ENCODE measurements at regions of chr3 and their contacts with region 1.

Region 1: GRCh38 chr3:143674100-143674968 is 173.9 kb downstream of the SLC9A9 start:
- DNase-seq: peak; percentile 3 to 88
- H3K4me3 ChIP-seq: no peak overlapping the region
- H3K27ac ChIP-seq: no peak overlapping the region
- H3K4me1 ChIP-seq: no peaks in the 10 kb centered on the region; a peak in 1 of 7 replicates
- H3K27me3 ChIP-seq: no peaks in the 10 kb centered on the region
- CTCF ChIP-seq: peak; percentile 67 to 89 (median 88)
- EP300 ChIP-seq: no peak
- POLR2A ChIP-seq: no peak
- RAD21 ChIP-seq: peak; percentile 85 to 91

Region 2: GRCh38 chr3:143433787-143434378 is 240.5 kb before region 1 on chr3:
- CTCF ChIA-PET with region 1: interaction called, 13 read pairs
- POLR2A ChIA-PET with region 1: no interaction called
- DNase-seq: peak in 1 of 2 experiments; percentile 58
- H3K4me3 ChIP-seq: no peak overlapping the region
- H3K27ac ChIP-seq: no peak overlapping the region
- H3K4me1 ChIP-seq: peaks cover 3 to 13% (median 10%) of the 10 kb centered on the region in 4 experiments; a peak in 4 of 7 replicates
- H3K27me3 ChIP-seq: no peaks in the 10 kb centered on the region
- CTCF ChIP-seq: peak in 2 of 3 experiments; percentile 53 to 76; a peak in 3 of 4 replicates
- EP300 ChIP-seq: no peak
- POLR2A ChIP-seq: no peak
- RAD21 ChIP-seq: peak; percentile 78 to 79

Region 3: DNA sequence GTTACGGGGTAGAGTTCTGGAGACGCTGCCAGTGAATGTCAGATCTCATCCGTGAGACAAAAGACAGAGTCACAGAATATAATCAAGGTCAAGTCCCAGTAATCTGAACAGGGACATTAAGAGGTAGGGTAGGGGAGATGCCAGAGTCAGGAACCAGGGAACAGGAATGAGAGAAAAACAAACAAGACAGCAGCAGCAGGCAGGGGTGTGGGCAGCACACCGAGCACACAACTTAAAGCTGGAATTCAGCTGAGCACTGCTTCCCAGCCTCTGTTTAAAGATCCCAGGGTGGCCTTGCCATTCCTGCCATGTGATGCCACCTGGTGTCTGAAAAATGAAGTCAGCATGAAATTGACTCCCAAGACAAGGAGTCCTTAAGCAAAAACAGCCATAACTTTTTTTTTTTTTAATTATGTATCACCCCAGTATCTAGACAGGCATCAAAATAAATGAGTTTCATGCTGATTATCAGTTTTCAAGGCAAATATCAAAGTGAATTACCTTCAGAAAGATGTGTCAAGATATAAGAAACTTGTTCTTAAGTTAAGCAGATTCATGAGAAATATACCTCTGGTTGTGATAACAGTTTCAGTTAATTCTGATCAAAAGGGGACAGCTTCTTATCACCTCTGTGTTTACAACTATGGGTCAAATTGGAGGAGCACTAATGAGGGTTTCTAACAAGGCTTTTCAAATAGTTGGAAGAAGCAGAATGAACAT is 29.8 kb before region 1 on chr3:
- CTCF ChIA-PET with region 1: interaction called, 48 read pairs
- POLR2A ChIA-PET with region 1: no interaction called
- DNase-seq: peak; percentile 43 to 48
- H3K4me3 ChIP-seq: no peak overlapping the region
- H3K27ac ChIP-seq: no peak overlapping the region
- H3K4me1 ChIP-seq: no peaks in the 10 kb centered on the region; a peak in 1 of 7 replicates
- H3K27me3 ChIP-seq: no peaks in the 10 kb centered on the region
- CTCF ChIP-seq: peak; percentile 39 to 75 (median 69)
- EP300 ChIP-seq: no peak
- POLR2A ChIP-seq: no peak
- RAD21 ChIP-seq: peak; percentile 88 to 91

Region 4: DNA sequence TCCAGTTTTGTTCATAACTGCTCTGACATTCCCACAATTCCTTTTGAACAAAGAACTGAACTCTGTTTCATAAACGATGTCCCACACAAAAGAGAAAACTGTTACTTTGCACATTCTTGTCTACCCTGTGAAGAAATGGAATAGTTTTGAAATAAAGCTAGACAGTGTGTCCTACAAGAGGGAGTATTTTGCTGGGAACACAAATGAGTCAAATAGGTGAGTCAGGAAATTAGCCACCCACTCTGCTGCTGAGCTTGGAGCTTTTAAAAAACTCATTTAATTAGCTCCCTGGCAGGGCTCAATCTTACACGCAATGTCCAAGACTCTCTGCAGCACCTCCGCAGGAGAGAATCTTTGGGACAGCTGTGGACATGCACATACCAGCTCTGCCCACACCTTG is 19.4 kb before region 1 on chr3:
- CTCF ChIA-PET with region 1: interaction called, 48 read pairs
- POLR2A ChIA-PET with region 1: no interaction called
- DNase-seq: no peak
- H3K4me3 ChIP-seq: no peak overlapping the region
- H3K27ac ChIP-seq: no peak overlapping the region
- H3K4me1 ChIP-seq: peaks cover 0 to 4% (median 0%) of the 10 kb centered on the region in 4 experiments; a peak in 3 of 7 replicates
- H3K27me3 ChIP-seq: peaks cover 0 to 1% (median 0%) of the 10 kb centered on the region in 4 experiments; a peak in 1 of 7 replicates
- CTCF ChIP-seq: no peak
- EP300 ChIP-seq: no peak
- POLR2A ChIP-seq: no peak
- RAD21 ChIP-seq: no peak

Region 5: GRCh38 chr3:143661677-143662076 is 12.7 kb before region 1 on chr3:
- CTCF ChIA-PET with region 1: interaction called, 12 read pairs
- POLR2A ChIA-PET with region 1: no interaction called
- DNase-seq: no peak
- H3K4me3 ChIP-seq: no peak overlapping the region
- H3K27ac ChIP-seq: no peak overlapping the region
- H3K4me1 ChIP-seq: peaks cover 0 to under 1% (median 0%) of the 10 kb centered on the region in 4 experiments; a peak in 2 of 7 replicates
- H3K27me3 ChIP-seq: no peaks in the 10 kb centered on the region
- CTCF ChIP-seq: no peak
- EP300 ChIP-seq: no peak
- POLR2A ChIP-seq: no peak
- RAD21 ChIP-seq: no peak

Region 6: GRCh38 chr3:143699424-143699823 is 25.1 kb after region 1 on chr3:
- CTCF ChIA-PET with region 1: interaction called, 10 read pairs
- POLR2A ChIA-PET with region 1: no interaction called
- DNase-seq: no peak
- H3K4me3 ChIP-seq: no peak overlapping the region
- H3K27ac ChIP-seq: no peak overlapping the region
- H3K4me1 ChIP-seq: no peaks in the 10 kb centered on the region
- H3K27me3 ChIP-seq: no peaks in the 10 kb centered on the region
- CTCF ChIP-seq: no peak
- EP300 ChIP-seq: no peak
- POLR2A ChIP-seq: no peak
- RAD21 ChIP-seq: no peak

Region 7: DNA sequence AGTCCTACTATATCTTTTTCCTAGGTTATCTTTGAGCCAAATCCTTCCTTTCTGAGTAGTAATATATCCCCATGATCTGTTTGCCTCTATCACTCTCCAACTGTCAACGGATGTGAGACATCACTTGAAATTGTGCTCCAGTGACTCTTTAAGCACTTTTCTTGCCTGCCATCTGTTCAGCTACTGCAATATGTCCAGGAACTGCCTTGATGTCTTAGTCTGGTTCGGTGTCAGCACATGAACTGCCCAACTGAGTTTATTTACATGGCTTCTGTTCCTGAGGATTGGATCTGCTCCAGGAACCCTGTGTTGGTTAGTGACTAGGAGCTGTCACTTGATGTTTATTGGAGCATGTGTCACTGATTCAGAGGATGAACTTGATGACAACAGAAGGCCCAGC is 57.4 kb after region 1 on chr3:
- CTCF ChIA-PET with region 1: no interaction called
- POLR2A ChIA-PET with region 1: no interaction called
- DNase-seq: no peak
- H3K4me3 ChIP-seq: no peak overlapping the region
- H3K27ac ChIP-seq: no peak overlapping the region
- H3K4me1 ChIP-seq: no peaks in the 10 kb centered on the region
- H3K27me3 ChIP-seq: no peaks in the 10 kb centered on the region
- CTCF ChIP-seq: no peak
- EP300 ChIP-seq: no peak
- POLR2A ChIP-seq: no peak
- RAD21 ChIP-seq: no peak

Region 8: DNA sequence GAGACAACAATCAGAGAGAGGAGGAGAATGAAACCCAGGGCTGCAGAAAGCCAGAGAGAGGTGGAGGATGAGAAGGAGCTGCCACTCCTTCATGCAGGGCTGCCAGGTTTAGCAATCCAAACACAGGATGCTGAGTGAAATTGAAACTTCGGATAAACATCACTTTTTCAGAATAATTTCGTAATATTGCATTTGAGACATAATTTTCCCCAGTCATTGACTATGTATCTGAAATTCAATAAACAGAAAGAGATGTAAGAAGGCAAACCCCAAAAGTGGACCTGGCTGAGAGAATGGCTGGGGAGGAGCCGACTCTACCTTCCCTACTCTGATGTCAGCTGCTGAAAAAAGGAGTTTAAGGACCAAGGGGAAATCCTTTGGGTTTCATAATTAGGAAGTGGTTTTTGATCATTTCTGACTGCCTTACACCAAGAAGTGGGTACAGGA is 140.1 kb after region 1 on chr3:
- CTCF ChIA-PET with region 1: no interaction called
- POLR2A ChIA-PET with region 1: no interaction called
- DNase-seq: no peak
- H3K4me3 ChIP-seq: no peak overlapping the region
- H3K27ac ChIP-seq: no peak overlapping the region
- H3K4me1 ChIP-seq: no peaks in the 10 kb centered on the region
- H3K27me3 ChIP-seq: no peaks in the 10 kb centered on the region
- CTCF ChIP-seq: no peak
- EP300 ChIP-seq: no peak
- POLR2A ChIP-seq: no peak
- RAD21 ChIP-seq: no peak

Region 9: GRCh38 chr3:143847787-143848631 is 173.7 kb after region 1 on chr3 and contains the start of gene SLC9A9:
- CTCF ChIA-PET with region 1: no interaction called
- POLR2A ChIA-PET with region 1: no interaction called
- DNase-seq: no peak
- H3K4me3 ChIP-seq: peak within 1 kb of the TSS in 3 of 4 experiments; percentile 9 to 25 (median 11); a peak in 5 of 8 replicates
- H3K27ac ChIP-seq: no peak within 1 kb of the TSS
- H3K4me1 ChIP-seq: peaks cover 0 to 10% (median 7%) of the 10 kb centered on the region in 4 experiments; a peak in 3 of 7 replicates
- H3K27me3 ChIP-seq: no peaks in the 10 kb centered on the region
- CTCF ChIP-seq: no peak
- EP300 ChIP-seq: no peak
- POLR2A ChIP-seq: no peak
- RAD21 ChIP-seq: no peak
- total RNA-seq, gene SLC9A9: 1.1 and 1.5 TPM in 2 replicates

Measured in H1 (cell line).